CD14-positive monocyte (primary cell): ENCODE measurements at regions of chr1 and their contacts with region 1.

Region 1: GRCh38 chr1:108691942-108692723 is at the start of gene PRPF38B:
- DNase-seq: peak; percentile 89 to 91 (median 90)
- H3K4me3 ChIP-seq: peak within 1 kb of the TSS; percentile 67 to 86 (median 83)
- H3K4me3 Mint-ChIP-seq: peak within 1 kb of the TSS; percentile 92 to 98
- H3K27ac ChIP-seq: peak within 1 kb of the TSS; percentile 94 to 95
- H3K27ac Mint-ChIP-seq: peak within 1 kb of the TSS; percentile 97 to 99 (median 99)
- H3K4me1 ChIP-seq: peaks cover 18 to 42% of the 10 kb centered on the region in 2 donors
- H3K4me1 Mint-ChIP-seq: peaks cover 33% of the 10 kb centered on the region
- H3K27me3 ChIP-seq: no peaks in the 10 kb centered on the region
- H3K27me3 Mint-ChIP-seq: peaks cover 0 to 8% (median 5%) of the 10 kb centered on the region in 3 donors
- CTCF ChIP-seq: no peak
- polyA plus RNA-seq, gene PRPF38B: 4.9 to 29.9 (median 8.3) TPM

Region 2: DNA sequence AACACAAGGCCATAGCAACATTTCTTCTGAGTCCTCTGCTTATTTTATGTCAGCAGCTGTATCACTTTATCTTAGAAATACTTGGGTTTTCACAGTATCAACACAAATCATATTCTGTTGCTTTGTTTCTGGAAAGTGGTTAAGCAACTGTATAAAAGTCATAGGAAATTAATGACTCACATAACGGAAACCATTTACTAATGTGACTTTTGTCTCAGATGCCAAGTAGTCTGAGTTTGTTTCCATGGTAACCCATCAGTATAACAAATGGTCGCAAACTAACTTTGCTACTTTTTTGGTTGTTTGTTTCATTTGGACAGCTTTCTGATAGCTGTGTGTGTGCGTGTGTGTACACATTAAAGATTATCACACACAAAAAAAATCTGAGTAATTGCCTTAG is 101.2 kb before region 1 on chr1:
- intact Hi-C with region 1: loop called in 1 of 2 experiments (anchors 5 kb)
- DNase-seq: peak; percentile 85 to 99 (median 93)
- H3K4me3 ChIP-seq: no peak overlapping the region
- H3K4me3 Mint-ChIP-seq: no peak overlapping the region
- H3K27ac ChIP-seq: peak overlapping the region in 1 of 2 donors; percentile 88
- H3K27ac Mint-ChIP-seq: peak overlapping the region; percentile 91 to 98 (median 96)
- H3K4me1 ChIP-seq: peaks cover 40 to 49% of the 10 kb centered on the region in 2 donors
- H3K4me1 Mint-ChIP-seq: peaks cover 53% of the 10 kb centered on the region
- H3K27me3 ChIP-seq: no peaks in the 10 kb centered on the region
- H3K27me3 Mint-ChIP-seq: peaks cover 0 to 6% (median 2%) of the 10 kb centered on the region in 3 donors
- CTCF ChIP-seq: no peak

Region 3: GRCh38 chr1:108746372-108747205 is 54.5 kb after region 1 on chr1 and contains the start of gene STXBP3:
- intact Hi-C with region 1: loop called (anchors 2 to 5 kb)
- DNase-seq: peak; percentile 97 to 99 (median 99)
- H3K4me3 ChIP-seq: peak within 1 kb of the TSS; percentile 79 to 99 (median 85)
- H3K4me3 Mint-ChIP-seq: peak within 1 kb of the TSS; percentile 91 to 99
- H3K27ac ChIP-seq: peak within 1 kb of the TSS; percentile 97 to 100
- H3K27ac Mint-ChIP-seq: peak within 1 kb of the TSS; percentile 99 to 100 (median 99)
- H3K4me1 ChIP-seq: peaks cover 12 to 20% of the 10 kb centered on the region in 2 donors
- H3K4me1 Mint-ChIP-seq: peaks cover 33% of the 10 kb centered on the region
- H3K27me3 ChIP-seq: no peaks in the 10 kb centered on the region
- H3K27me3 Mint-ChIP-seq: no peaks in the 10 kb centered on the region
- CTCF ChIP-seq: peak; percentile 94
- polyA plus RNA-seq, gene STXBP3: 32.3 to 56.2 (median 48.3) TPM

Region 4: DNA sequence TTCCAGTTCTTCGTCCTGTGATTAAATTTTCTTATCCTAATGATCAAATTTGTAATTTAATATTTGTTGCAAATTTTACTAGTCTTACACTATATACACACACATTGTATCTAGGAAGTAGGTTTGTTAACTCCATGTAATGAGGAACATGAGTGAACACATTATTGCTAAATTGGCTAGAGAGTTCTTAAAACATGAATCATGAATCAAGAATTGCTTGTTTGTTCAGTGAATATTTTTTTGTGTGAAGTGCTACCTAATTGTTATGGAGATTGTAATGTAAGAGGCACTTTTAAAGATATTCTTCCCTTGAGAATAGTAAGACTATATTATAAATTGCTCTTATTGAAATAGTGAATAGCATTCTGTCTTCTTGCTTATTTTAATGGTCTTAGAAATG is 189.2 kb after region 1 on chr1:
- intact Hi-C with region 1: loop called in 1 of 2 experiments (anchors 10 kb)
- DNase-seq: peak in 2 of 3 donors; percentile 39 to 63
- H3K4me3 ChIP-seq: no peak overlapping the region
- H3K4me3 Mint-ChIP-seq: no peak overlapping the region
- H3K27ac ChIP-seq: no peak overlapping the region
- H3K27ac Mint-ChIP-seq: peak overlapping the region in 5 of 7 donors; percentile 10 to 83 (median 20)
- H3K4me1 ChIP-seq: peaks cover 21 to 32% of the 10 kb centered on the region in 2 donors
- H3K4me1 Mint-ChIP-seq: peaks cover 36% of the 10 kb centered on the region
- H3K27me3 ChIP-seq: no peaks in the 10 kb centered on the region
- H3K27me3 Mint-ChIP-seq: peaks cover 0 to 2% (median 0%) of the 10 kb centered on the region in 3 donors
- CTCF ChIP-seq: no peak